Activated CD8-positive, alpha-beta T cell treated with anti-CD3 and anti-CD28 coated beads for 36 hours (primary cell): ENCODE measurements at regions of chr1 and their contacts with region 1.

Region 1: DNA sequence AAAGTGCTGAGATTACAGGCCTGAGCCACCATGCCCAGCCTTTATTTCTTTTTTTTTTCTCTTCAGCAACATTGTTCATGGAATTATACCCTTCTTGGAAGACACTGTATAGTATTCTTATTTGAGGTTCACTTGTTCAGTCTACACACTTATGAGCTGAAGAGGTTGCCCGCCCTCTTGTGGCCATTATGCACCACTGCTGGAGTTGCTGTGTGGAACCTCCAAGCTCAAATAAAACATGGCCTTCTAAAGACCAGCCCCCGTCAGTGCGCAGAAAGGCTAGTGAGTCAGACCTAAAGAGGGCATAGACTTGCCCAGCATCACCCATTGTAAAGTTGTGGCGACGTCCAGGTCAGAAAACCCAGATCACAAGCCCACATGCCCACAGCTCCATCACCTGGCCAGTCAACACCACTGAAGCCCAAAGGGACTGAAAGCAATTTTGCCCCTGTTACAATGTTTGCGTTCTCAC is 20.4 kb downstream of the LURAP1 start:
- DNase-seq: peak; percentile 87
- ATAC-seq: peak; percentile 98
- H3K4me3 Mint-ChIP-seq: no peak overlapping the region
- H3K27ac Mint-ChIP-seq: no peak overlapping the region
- H3K4me1 Mint-ChIP-seq: peaks cover 2% of the 10 kb centered on the region
- H3K27me3 Mint-ChIP-seq: no peaks in the 10 kb centered on the region
- CTCF ChIP-seq: peak; percentile 88

Region 2: DNA sequence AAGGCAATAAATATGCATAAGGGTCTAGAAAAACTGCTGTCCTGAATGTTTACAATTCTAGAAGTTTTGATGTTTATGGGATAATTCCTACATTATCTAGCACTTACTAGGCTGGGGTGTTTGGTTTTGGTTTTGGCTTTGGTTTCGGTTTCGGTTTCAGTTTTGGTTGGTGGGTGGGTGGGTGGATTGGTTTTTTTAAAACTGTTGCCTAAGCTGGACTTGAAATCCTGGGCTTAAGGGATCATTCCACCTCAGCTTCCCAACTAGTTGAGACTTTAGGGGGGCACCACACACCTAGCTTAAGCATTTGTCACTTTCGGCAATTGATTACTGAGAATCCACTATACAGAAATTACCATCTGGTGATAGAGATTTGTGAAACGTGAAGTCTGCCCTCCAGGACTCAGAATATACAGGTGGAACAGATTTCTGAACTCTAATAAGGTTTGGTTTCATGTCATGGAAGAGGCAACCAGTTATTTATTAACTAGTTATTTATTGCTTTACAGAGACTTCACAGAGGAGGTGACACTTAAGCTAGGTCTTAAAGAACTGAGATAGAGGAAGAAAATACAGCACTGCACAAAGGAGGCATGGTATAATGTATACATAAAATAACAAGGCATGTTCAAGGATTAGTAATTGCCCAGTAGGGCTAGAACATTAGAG is 160.7 kb before region 1 on chr1:
- CTCF ChIA-PET with region 1: interaction called, 10 read pairs
- POLR2A ChIA-PET with region 1: no interaction called
- intact Hi-C with region 1: no loop called
- DNase-seq: peak; percentile 69
- ATAC-seq: peak; percentile 49
- H3K4me3 Mint-ChIP-seq: no peak overlapping the region
- H3K27ac Mint-ChIP-seq: no peak overlapping the region
- H3K4me1 Mint-ChIP-seq: peaks cover 23% of the 10 kb centered on the region
- H3K27me3 Mint-ChIP-seq: no peaks in the 10 kb centered on the region
- CTCF ChIP-seq: no peak

Region 3: GRCh38 chr1:46179138-46180081 is 44.1 kb before region 1 on chr1:
- CTCF ChIA-PET with region 1: interaction called, 54 read pairs
- POLR2A ChIA-PET with region 1: interaction called, 3 read pairs
- intact Hi-C with region 1: no loop called
- DNase-seq: peak; percentile 79
- ATAC-seq: peak; percentile 77
- H3K4me3 Mint-ChIP-seq: no peak overlapping the region
- H3K27ac Mint-ChIP-seq: no peak overlapping the region
- H3K4me1 Mint-ChIP-seq: peaks cover 7% of the 10 kb centered on the region
- H3K27me3 Mint-ChIP-seq: no peaks in the 10 kb centered on the region
- CTCF ChIP-seq: peak; percentile 95

Region 4: DNA sequence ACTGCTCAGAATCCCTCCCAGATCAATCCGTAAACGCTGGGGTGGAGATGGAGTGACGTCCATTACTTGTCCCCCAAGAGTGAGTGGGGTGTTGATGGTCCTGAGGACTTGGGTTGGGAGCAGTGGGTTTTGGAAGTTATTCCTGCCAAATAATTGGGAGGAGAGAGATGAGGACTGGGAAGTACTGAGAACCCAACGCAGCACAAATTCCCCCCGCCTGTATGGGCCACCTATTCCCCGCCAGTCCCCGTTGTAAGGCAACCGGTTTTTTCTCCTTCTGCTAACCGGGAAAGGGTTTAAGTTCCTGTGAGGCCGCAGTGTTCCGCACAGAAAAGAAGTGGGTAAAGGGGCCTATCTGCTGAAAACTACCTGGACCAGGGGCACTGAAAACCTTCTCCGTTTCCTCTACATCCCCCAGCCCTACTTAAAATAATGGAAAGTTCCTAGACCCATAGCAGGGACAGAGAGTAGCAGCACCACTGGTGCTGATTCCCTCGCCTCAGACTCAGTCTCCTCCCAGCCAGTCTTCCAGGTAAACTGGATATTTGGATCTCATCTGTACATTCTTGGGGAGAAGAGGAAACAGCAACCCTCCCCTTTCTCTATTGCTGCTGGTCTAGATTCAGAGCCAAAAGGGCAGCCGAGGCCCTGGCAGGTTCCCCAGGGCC is 19.6 kb before region 1 on chr1:
- CTCF ChIA-PET with region 1: interaction called, 21 read pairs
- POLR2A ChIA-PET with region 1: interaction called, 4 read pairs
- intact Hi-C with region 1: no loop called
- DNase-seq: no peak
- ATAC-seq: no peak
- H3K4me3 Mint-ChIP-seq: peak overlapping the region; percentile 76
- H3K27ac Mint-ChIP-seq: no peak overlapping the region
- H3K4me1 Mint-ChIP-seq: peaks cover 10% of the 10 kb centered on the region
- H3K27me3 Mint-ChIP-seq: peaks cover 1% of the 10 kb centered on the region
- CTCF ChIP-seq: no peak

Region 5: DNA sequence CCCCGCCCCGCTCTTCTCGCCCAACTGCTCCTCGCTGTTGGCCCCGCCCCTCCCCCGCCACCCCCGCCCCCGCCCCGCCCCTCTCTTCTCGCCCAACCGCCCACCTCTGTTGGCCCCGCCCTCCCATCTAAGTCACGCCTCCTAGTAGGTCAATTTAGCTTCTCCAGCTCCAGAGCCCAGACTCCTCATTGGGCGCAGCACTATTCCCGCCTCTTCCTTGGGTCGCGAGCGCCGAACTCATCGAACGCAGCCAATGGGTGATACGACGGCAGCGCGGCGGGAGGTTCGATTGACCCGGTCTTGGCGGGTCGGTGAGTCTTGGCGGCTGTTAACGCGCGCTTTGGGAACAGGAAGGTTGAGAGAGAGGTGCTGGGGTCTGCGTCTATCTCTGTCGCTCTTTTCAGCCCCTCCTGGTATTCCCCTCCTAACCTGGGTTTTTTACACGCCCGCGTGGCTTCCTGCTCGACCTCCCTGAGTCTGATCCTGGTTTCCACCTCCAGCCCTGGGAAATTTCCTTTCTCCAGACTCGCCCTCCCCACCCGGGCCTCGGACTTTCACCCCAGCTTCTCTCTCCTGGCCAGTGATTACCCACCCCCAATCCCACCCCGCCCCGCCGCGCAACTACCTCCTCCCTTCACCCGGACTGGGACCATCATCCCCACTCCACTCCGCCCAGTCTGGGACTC is 24.1 kb after region 1 on chr1 and contains the start of gene RAD54L:
- CTCF ChIA-PET with region 1: interaction called, 28 read pairs
- POLR2A ChIA-PET with region 1: interaction called, 3 read pairs
- intact Hi-C with region 1: no loop called
- DNase-seq: peak; percentile 100
- ATAC-seq: peak; percentile 91
- H3K4me3 Mint-ChIP-seq: peak within 1 kb of the TSS; percentile 95
- H3K27ac Mint-ChIP-seq: peak within 1 kb of the TSS; percentile 99
- H3K4me1 Mint-ChIP-seq: peaks cover 24% of the 10 kb centered on the region
- H3K27me3 Mint-ChIP-seq: no peaks in the 10 kb centered on the region
- CTCF ChIP-seq: no peak
- total RNA-seq, gene RAD54L: 64.6 to 65.1 TPM

Region 6: GRCh38 chr1:46425726-46426125 is 202.2 kb after region 1 on chr1:
- CTCF ChIA-PET with region 1: no interaction called
- POLR2A ChIA-PET with region 1: no interaction called
- intact Hi-C with region 1: no loop called
- DNase-seq: no peak
- ATAC-seq: no peak
- H3K4me3 Mint-ChIP-seq: no peak overlapping the region
- H3K27ac Mint-ChIP-seq: no peak overlapping the region
- H3K4me1 Mint-ChIP-seq: no peaks in the 10 kb centered on the region
- H3K27me3 Mint-ChIP-seq: peaks cover 20% of the 10 kb centered on the region
- CTCF ChIP-seq: no peak